ENCODE measurements at regions of chr9 and their contacts with region 1.

Region 1: DNA sequence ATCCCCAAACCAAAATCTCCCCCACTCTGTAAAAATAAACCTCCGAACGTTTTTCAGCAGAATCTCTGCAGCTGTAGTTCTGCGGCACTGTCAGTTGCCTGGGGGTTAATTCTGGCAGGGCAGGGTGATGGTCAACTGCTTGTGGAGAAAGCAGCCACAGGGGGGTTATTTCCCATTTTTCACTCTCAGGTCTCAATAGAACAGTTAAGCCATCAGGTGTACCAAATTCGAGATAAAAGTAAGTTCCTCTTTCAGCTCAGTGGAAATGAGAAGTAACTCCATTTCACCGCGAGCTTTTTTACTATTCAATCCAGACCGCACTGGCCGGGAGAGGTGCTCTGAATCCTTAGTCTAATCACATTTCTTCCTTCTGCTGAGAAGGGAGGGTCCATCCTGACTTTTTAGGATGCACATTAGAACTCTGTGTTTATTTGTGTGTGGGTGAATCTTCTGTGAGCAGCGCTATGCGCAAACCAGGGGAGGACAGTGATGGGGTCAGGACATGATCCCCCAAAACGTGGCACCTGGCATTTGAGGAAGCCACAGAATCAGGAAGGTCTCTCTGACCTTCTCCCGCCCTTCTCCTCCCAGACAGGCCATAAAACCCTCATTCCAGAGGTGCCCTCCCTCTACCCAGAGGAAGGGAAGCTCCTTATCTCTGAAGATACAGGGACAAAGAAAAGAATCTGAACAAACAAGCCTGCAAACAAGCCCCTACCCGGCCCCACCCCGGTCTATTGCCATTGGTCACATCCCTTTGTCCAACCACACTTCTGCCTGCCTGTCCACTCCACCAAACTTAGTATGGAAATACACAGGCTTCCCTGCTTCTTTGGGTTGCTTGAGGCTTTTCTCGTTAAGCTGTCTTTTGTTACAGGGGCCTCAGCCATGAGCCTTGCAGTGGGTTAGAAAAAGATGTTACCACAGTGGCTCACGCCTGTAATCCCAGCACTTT is 229.0 kb downstream of the ROR2 start:
- DNase-seq: no peak
- H3K27ac ChIP-seq: no peak overlapping the region
- CTCF ChIP-seq: no peak

Region 2: GRCh38 chr9:90064971-90065370 is 1656.1 kb before region 1 on chr9:
- CTCF ChIA-PET with region 1: no interaction called
- POLR2A ChIA-PET with region 1: interaction called, 11 read pairs
- DNase-seq: no peak
- H3K27ac ChIP-seq: no peak overlapping the region
- CTCF ChIP-seq: no peak

Measured in RWPE1 (cell line).